Right ventricle myocardium superior (tissue), 1 donor: ENCODE measurements at regions of chr10 and their contacts with region 1.

Region 1: GRCh38 chr10:52979295-52979990 is 206.9 kb upstream of the MBL2 start:
- DNase-seq: no peak
- ATAC-seq: no peak

Region 2: GRCh38 chr10:53003094-53003493 is 23.7 kb after region 1 on chr10:
- intact Hi-C with region 1: loop called (anchors 2 kb)
- DNase-seq: no peak
- ATAC-seq: no peak

Region 3: DNA sequence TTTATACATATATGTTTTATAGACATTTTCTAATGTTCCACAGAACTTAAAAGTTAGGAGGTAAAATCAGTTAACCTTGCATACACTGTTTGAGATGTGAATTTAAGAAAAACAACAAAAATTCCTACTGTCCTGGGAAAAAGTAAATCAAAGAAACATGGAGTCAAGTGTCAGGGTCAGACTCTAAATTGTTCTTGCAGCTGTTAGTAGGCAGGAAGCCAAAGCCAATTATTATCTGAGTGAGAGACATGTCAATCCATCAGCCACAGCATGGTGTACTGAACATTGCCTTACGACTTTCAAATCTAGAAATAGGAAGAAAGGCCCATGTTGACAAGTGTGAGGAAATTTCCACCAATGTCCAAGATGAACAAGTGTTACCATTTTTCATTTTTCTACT is 254.3 kb after region 1 on chr10:
- intact Hi-C with region 1: no loop called
- DNase-seq: no peak
- ATAC-seq: no peak